Head of caudate nucleus (tissue), 42 donors: ENCODE measurements at regions of chr15 and their contacts with region 1.

Region 1: GRCh38 chr15:57340682-57341259 is 35.5 kb upstream of the CGNL1 start:
- DNase-seq: peak in 40 of 42 donors; percentile 28 to 85 (median 62)

Region 2: GRCh38 chr15:57527382-57528091 is 186.8 kb after region 1 on chr15:
- intact Hi-C with region 1: loop called (anchors 5 kb)
- DNase-seq: peak in 19 of 42 donors; percentile 19 to 73 (median 40)

Region 3: GRCh38 chr15:57561041-57561711 is 220.4 kb after region 1 on chr15:
- intact Hi-C with region 1: no loop called
- DNase-seq: peak in 41 of 42 donors; percentile 22 to 88 (median 70)

Region 4: GRCh38 chr15:57591646-57592367 is 251.0 kb after region 1 on chr15 and contains the start of gene MYZAP:
- intact Hi-C with region 1: no loop called
- DNase-seq: peak in 25 of 42 donors; percentile 5 to 52 (median 21)